Activated naive CD4-positive, alpha-beta T cell treated with anti-CD3 and anti-CD28 coated beads for 36 hours (primary cell): ENCODE measurements at regions of chr12 and their contacts with region 1.

Region 1: DNA sequence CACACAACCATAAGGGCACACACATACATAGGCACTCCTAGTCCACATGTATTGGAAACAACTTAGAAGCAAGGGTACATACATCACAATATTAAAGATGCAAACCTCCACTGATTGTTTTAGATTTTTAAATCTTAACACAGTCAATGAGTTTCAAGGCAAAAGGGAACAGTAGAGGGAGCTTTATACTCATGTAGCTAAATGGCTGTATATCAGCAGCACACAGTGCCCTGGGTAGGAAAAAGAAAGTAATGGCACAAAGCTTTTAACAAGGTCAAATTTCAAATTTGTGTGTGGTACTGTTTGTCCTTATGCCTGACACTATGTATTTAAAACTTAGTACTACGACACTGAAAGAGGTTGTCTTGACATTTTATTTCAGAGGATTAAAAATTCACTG is 262.0 kb downstream of the MED13L start:
- DNase-seq: no peak
- H3K4me3 Mint-ChIP-seq: no peak overlapping the region
- H3K27ac Mint-ChIP-seq: peak overlapping the region; percentile 14
- H3K4me1 Mint-ChIP-seq: peaks cover 2% of the 10 kb centered on the region
- H3K27me3 Mint-ChIP-seq: no peaks in the 10 kb centered on the region

Region 2: GRCh38 chr12:116135209-116135930 is 119.8 kb after region 1 on chr12:
- CTCF ChIA-PET with region 1: interaction called, 3 read pairs
- intact Hi-C with region 1: loop called (anchors 5 kb)
- DNase-seq: no peak
- H3K4me3 Mint-ChIP-seq: no peak overlapping the region
- H3K27ac Mint-ChIP-seq: peak overlapping the region; percentile 89
- H3K4me1 Mint-ChIP-seq: peaks cover 76% of the 10 kb centered on the region
- H3K27me3 Mint-ChIP-seq: no peaks in the 10 kb centered on the region

Region 3: GRCh38 chr12:116194935-116195431 is 179.5 kb after region 1 on chr12:
- CTCF ChIA-PET with region 1: interaction called, 3 read pairs
- intact Hi-C with region 1: loop called (anchors 1 kb)
- DNase-seq: peak; percentile 87
- H3K4me3 Mint-ChIP-seq: no peak overlapping the region
- H3K27ac Mint-ChIP-seq: no peak overlapping the region
- H3K4me1 Mint-ChIP-seq: peaks cover 53% of the 10 kb centered on the region
- H3K27me3 Mint-ChIP-seq: no peaks in the 10 kb centered on the region

Region 4: DNA sequence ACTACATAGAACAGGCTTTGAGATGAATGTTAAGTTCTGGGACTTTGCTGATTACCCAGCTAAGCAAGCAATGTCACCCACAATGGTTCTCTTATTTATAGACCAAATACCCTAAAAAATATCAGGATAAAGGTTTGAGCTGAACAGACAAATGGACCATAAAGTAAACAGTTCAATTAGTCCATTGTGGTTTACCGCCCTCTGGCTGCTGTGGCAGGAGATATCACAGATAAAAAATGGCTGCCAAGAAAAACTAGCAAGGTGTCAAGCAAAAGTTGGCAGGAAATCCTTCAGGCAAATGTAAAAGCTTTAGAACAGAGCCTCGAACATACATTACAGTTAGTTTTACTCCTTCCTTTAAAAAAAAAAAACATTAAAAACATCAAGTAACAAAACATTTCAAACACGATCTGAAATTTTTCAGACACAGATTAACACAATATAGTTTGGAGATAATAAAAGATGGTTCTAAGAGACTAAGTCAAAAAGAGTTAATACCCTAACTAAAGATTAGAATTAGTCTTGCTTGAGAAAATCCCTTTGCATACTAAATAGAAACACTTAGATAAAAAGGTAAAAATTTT is 220.7 kb after region 1 on chr12:
- CTCF ChIA-PET with region 1: interaction called, 14 read pairs
- intact Hi-C with region 1: loop called (anchors 1 kb)
- DNase-seq: peak; percentile 77
- H3K4me3 Mint-ChIP-seq: peak overlapping the region; percentile 4
- H3K27ac Mint-ChIP-seq: peak overlapping the region; percentile 71
- H3K4me1 Mint-ChIP-seq: peaks cover 37% of the 10 kb centered on the region
- H3K27me3 Mint-ChIP-seq: no peaks in the 10 kb centered on the region

Region 5: DNA sequence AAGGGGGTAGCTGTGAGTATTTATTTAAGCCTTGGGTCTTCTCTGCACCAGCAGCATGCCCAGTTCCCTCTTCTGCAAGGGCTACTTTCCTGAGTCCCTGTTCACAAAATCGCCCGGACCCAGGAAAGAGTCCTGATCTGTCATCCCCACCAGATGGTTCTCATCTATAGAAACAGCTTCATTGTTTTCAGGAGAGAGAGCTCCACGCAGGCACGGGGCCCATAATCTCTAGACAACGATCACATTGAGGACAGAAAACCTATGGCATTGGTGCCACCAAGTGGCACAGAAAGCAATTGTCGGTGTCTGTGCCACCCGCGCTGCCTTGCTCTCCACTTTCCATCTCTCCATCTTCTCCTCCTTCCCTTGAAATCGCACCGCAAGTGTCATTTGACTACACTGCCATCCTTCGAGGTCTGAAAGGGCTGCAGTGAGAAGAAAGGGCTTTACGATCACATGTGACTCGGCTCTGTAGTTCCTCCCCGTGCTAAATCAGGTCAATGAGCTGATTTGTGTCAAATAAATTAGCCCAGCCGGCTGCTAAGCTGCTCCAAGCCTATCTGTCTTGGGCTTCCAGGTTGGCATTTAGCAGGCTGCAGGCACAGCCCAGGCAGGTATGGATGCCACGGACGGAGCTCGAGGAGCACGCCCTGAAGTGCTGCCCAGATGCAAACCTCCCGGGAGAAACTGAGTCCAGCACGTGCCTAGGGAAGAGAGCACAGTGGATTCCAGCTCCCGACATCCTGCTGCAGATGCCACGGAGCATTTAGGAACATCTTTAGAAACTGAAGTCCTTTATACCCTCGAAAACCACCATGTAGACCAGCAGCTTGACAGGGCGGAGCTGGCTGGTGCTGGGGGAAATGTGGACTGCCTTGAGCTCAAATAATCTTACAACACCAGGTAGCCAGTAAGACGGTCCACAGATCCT is 693.6 kb after region 1 on chr12:
- CTCF ChIA-PET with region 1: no interaction called
- intact Hi-C with region 1: loop called (anchors 5 kb)
- DNase-seq: peak; percentile 71
- H3K4me3 Mint-ChIP-seq: peak overlapping the region; percentile 63
- H3K27ac Mint-ChIP-seq: no peak overlapping the region
- H3K4me1 Mint-ChIP-seq: peaks cover 8% of the 10 kb centered on the region
- H3K27me3 Mint-ChIP-seq: peaks cover 6% of the 10 kb centered on the region

Region 6: GRCh38 chr12:116924558-116925453 is 909.3 kb after region 1 on chr12:
- CTCF ChIA-PET with region 1: no interaction called
- intact Hi-C with region 1: no loop called
- DNase-seq: peak; percentile 70
- H3K4me3 Mint-ChIP-seq: no peak overlapping the region
- H3K27ac Mint-ChIP-seq: no peak overlapping the region
- H3K4me1 Mint-ChIP-seq: peaks cover 66% of the 10 kb centered on the region
- H3K27me3 Mint-ChIP-seq: peaks cover 3% of the 10 kb centered on the region